Ovary (tissue), 10 donors: ENCODE measurements at regions of chr1 and their contacts with region 1.

Region 1: GRCh38 chr1:221664253-221664652 is 77.6 kb downstream of the DUSP10 start:
- DNase-seq: no peak
- H3K4me3 ChIP-seq: no peak overlapping the region
- H3K27ac ChIP-seq: no peak overlapping the region
- H3K4me1 ChIP-seq: no peaks in the 10 kb centered on the region
- H3K27me3 ChIP-seq: no peaks in the 10 kb centered on the region
- CTCF ChIP-seq: no peak
- EP300 ChIP-seq: no peak
- POLR2A ChIP-seq: no peak

Region 2: DNA sequence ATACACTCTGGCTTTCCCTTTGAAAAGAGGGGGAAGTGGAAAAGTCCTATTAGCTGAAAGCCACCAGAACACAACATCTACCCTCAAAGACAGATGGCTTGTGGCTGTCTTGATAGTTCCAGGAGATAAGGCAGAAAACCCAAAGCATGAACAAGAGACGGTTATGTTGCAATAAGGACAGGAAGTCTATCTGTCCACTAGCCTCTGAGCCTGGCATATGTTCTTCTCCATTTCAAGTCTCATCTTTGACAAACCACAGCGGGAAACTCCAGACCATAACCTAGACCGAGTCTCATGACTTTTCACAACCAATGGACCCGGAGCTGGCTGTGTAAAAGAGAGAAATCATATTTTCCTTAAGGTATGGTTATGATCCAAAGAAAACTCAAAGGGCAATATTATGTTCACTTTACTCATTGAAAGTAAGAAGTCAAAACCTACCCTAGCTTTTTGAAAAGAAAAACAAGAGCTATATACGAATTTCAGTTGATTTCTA is 43.9 kb after region 1 on chr1:
- intact Hi-C with region 1: loop called in 1 of 4 experiments (anchors 1 kb)
- DNase-seq: no peak
- H3K4me3 ChIP-seq: no peak overlapping the region
- H3K27ac ChIP-seq: no peak overlapping the region
- H3K4me1 ChIP-seq: no peaks in the 10 kb centered on the region
- H3K27me3 ChIP-seq: no peaks in the 10 kb centered on the region
- CTCF ChIP-seq: no peak
- EP300 ChIP-seq: no peak
- POLR2A ChIP-seq: no peak